CD4-positive, alpha-beta memory T cell (primary cell): ENCODE measurements at regions of chr21 and their contacts with region 1.

Region 1: DNA sequence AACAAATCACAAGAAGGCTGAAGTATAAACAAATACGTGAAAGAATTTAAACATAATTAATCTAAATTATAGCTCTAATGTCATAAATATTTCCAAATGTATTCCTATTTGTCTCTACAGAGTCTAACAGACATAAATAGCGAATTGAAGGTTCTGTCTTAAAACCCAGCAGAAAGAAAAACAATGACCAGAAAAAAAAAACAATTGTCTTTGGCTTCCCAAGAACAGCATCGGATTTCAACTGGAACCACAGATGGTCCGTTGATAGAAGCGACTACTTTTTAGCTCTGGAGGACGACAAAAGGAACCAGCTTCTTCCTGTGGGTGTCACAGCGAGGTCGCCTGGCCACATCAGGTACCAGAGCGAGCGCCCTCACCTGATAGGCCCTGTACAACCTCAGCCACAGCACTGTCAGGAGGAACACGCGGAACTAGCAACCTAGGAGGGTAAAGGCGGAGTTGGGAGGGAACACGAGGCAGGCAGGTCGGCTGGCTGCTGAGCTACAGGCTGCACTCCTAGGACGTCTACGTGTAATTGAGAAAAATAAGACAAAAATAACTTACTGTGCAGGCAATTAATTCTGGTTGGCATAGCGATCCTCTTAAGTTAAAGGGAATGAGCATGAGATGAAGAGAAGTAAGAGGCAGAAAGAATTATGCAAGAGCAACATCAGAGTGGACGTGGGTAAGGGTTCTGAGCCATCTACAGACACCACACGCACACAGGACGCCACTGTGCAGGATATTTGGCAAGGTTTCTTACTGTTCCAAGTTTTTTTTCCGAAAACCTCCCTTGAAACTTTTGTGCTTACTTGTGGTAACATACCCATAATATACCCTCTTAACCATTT is 16.7 kb upstream of the PRDM15 start:
- DNase-seq: peak; percentile 37 to 62 (median 57)
- H3K4me3 ChIP-seq: no peak overlapping the region
- H3K4me3 Mint-ChIP-seq: peak overlapping the region in 5 of 8 donors; percentile 5 to 62 (median 31)
- H3K27ac ChIP-seq: no peak overlapping the region
- H3K27ac Mint-ChIP-seq: peak overlapping the region in 6 of 7 donors; percentile 12 to 84 (median 43)
- H3K4me1 ChIP-seq: peaks cover 18% of the 10 kb centered on the region
- H3K4me1 Mint-ChIP-seq: peaks cover 9 to 20% (median 14%) of the 10 kb centered on the region in 4 donors
- H3K27me3 ChIP-seq: no peaks in the 10 kb centered on the region
- H3K27me3 Mint-ChIP-seq: no peaks in the 10 kb centered on the region

Region 2: GRCh38 chr21:41816220-41817165 is 79.4 kb before region 1 on chr21:
- CTCF ChIA-PET with region 1: interaction called, 4 read pairs
- POLR2A ChIA-PET with region 1: no interaction called
- intact Hi-C with region 1: loop called (anchors 10 kb)
- DNase-seq: peak; percentile 41 to 54 (median 46)
- H3K4me3 ChIP-seq: no peak overlapping the region
- H3K4me3 Mint-ChIP-seq: no peak overlapping the region
- H3K27ac ChIP-seq: no peak overlapping the region
- H3K27ac Mint-ChIP-seq: peak overlapping the region in 2 of 7 donors; percentile 31 to 47
- H3K4me1 ChIP-seq: no peaks in the 10 kb centered on the region
- H3K4me1 Mint-ChIP-seq: peaks cover 0 to 8% (median 2%) of the 10 kb centered on the region in 4 donors
- H3K27me3 ChIP-seq: no peaks in the 10 kb centered on the region
- H3K27me3 Mint-ChIP-seq: no peaks in the 10 kb centered on the region

Region 3: GRCh38 chr21:41879190-41879998 is 16.5 kb before region 1 on chr21 and contains the start of gene PRDM15:
- CTCF ChIA-PET with region 1: interaction called, 9 read pairs
- POLR2A ChIA-PET with region 1: interaction called, 12 read pairs
- intact Hi-C with region 1: loop called (anchors 1 kb)
- DNase-seq: peak; percentile 73 to 81 (median 75)
- H3K4me3 ChIP-seq: peak within 1 kb of the TSS; percentile 60 to 74
- H3K4me3 Mint-ChIP-seq: peak within 1 kb of the TSS; percentile 90 to 93 (median 92)
- H3K27ac ChIP-seq: peak within 1 kb of the TSS; percentile 69
- H3K27ac Mint-ChIP-seq: peak within 1 kb of the TSS; percentile 85 to 97 (median 96)
- H3K4me1 ChIP-seq: peaks cover 26% of the 10 kb centered on the region
- H3K4me1 Mint-ChIP-seq: peaks cover 14 to 37% (median 27%) of the 10 kb centered on the region in 4 donors
- H3K27me3 ChIP-seq: no peaks in the 10 kb centered on the region
- H3K27me3 Mint-ChIP-seq: no peaks in the 10 kb centered on the region
- total RNA-seq, gene PRDM15: 14.2 to 14.3 TPM

Region 4: GRCh38 chr21:42002421-42002958 is 106.6 kb after region 1 on chr21:
- CTCF ChIA-PET with region 1: no interaction called
- POLR2A ChIA-PET with region 1: no interaction called
- intact Hi-C with region 1: no loop called
- DNase-seq: peak; percentile 14 to 84 (median 28)
- H3K4me3 ChIP-seq: no peak overlapping the region
- H3K4me3 Mint-ChIP-seq: peak overlapping the region; percentile 25 to 81 (median 70)
- H3K27ac ChIP-seq: no peak overlapping the region
- H3K27ac Mint-ChIP-seq: peak overlapping the region in 6 of 7 donors; percentile 38 to 92 (median 70)
- H3K4me1 ChIP-seq: peaks cover 30% of the 10 kb centered on the region
- H3K4me1 Mint-ChIP-seq: peaks cover 28 to 58% (median 37%) of the 10 kb centered on the region in 4 donors
- H3K27me3 ChIP-seq: no peaks in the 10 kb centered on the region
- H3K27me3 Mint-ChIP-seq: no peaks in the 10 kb centered on the region